Breast epithelium (tissue), 4 donors: ENCODE measurements at regions of chr9 and their contacts with region 1.

Region 1: DNA sequence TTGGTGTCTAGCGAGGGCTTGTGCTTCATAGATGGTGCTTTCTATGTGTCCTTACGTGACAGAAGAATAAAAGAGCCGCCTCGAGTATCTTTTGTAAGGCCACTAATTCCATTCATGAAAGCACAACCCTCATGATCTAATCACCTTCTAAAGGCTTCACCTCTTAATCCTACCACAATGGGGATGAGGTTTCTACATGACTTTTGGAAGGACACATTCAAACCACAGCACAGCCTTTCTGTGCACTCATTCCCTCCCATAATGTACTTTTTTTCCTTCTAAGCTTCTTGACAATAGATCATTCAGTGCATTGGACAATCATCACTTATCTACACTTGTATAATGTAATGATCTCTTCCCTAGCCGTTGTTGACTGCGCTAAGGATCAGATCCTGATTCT is 774.8 kb downstream of the BRINP1 start:
- DNase-seq: no peak
- H3K4me3 ChIP-seq: no peak overlapping the region
- H3K27ac ChIP-seq: no peak overlapping the region
- H3K4me1 ChIP-seq: no peaks in the 10 kb centered on the region
- H3K27me3 ChIP-seq: no peaks in the 10 kb centered on the region
- CTCF ChIP-seq: no peak
- POLR2A ChIP-seq: no peak

Region 2: GRCh38 chr9:117825609-117826347 is 768.6 kb before region 1 on chr9:
- intact Hi-C with region 1: loop called (anchors 5 kb)
- DNase-seq: no peak
- H3K4me3 ChIP-seq: no peak overlapping the region
- H3K27ac ChIP-seq: no peak overlapping the region
- H3K4me1 ChIP-seq: no peaks in the 10 kb centered on the region
- H3K27me3 ChIP-seq: no peaks in the 10 kb centered on the region
- CTCF ChIP-seq: no peak
- POLR2A ChIP-seq: no peak

Region 3: DNA sequence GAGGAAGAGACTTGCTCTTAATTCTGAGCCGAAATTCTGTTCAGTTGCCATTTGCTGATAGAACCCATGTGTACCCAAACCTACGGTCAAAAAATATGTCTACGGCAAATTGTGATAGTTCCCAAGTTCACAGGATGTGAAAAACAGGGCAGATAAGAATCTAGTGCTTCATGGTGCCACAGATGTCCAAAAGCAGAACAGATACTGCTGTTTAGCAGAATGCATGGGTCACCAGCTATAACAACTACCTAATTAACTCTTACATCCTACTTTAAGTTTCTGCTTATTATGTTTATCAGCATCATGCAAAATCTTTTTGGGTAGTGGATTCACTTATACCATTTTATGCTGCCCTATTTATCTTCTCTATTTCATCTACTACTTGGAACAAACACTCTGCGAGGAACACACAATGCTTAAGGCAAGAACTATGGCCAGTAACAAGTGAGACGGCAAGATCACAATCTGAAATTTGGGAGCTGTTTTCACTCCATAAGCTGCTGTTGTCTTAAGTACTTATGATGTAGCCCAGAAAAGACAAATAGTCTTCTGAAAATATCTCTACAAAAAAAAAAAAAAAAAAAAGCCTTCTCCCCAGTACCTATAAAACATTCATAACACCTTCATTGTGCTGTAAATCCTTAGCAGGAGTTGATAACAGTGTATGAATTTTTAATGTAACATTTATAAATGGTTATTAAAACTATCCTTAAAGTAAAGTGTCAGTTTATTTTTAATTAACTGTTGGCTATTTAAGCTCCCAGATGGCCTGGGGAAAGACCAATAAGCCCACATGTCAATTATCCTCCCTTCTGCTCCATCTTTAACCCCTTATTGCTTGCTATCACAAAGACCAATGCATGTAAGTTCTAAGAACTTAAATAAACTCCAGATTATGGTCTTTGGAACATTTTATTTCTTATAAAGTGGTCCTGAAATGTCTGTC is 658.0 kb before region 1 on chr9:
- intact Hi-C with region 1: no loop called
- DNase-seq: no peak
- H3K4me3 ChIP-seq: no peak overlapping the region
- H3K27ac ChIP-seq: no peak overlapping the region
- H3K4me1 ChIP-seq: no peaks in the 10 kb centered on the region
- H3K27me3 ChIP-seq: no peaks in the 10 kb centered on the region
- CTCF ChIP-seq: no peak
- POLR2A ChIP-seq: no peak

Region 4: GRCh38 chr9:118693645-118694044 is 99.2 kb after region 1 on chr9:
- intact Hi-C with region 1: loop called (anchors 5 kb)
- DNase-seq: no peak
- H3K4me3 ChIP-seq: no peak overlapping the region
- H3K27ac ChIP-seq: no peak overlapping the region
- H3K4me1 ChIP-seq: no peaks in the 10 kb centered on the region
- H3K27me3 ChIP-seq: no peaks in the 10 kb centered on the region
- CTCF ChIP-seq: no peak
- POLR2A ChIP-seq: no peak